T-cell (primary cell): ENCODE measurements at regions of chr1 and their contacts with region 1.

Region 1: GRCh38 chr1:185291652-185292051 is 25.4 kb downstream of the IVNS1ABP start:
- DNase-seq: peak in 1 of 35 experiments; percentile 4
- ATAC-seq: no peak
- H3K4me3 ChIP-seq: no peak overlapping the region
- H3K4me3 Mint-ChIP-seq: no peak overlapping the region
- H3K27ac ChIP-seq: no peak overlapping the region
- H3K27ac Mint-ChIP-seq: peak overlapping the region in 1 of 2 donors; percentile 71
- H3K4me1 ChIP-seq: peaks cover 0 to 5% of the 10 kb centered on the region in 2 experiments
- H3K4me1 Mint-ChIP-seq: peaks cover 31 to 39% (median 37%) of the 10 kb centered on the region in 3 donors
- H3K27me3 ChIP-seq: no peaks in the 10 kb centered on the region
- H3K27me3 Mint-ChIP-seq: no peaks in the 10 kb centered on the region

Region 2: DNA sequence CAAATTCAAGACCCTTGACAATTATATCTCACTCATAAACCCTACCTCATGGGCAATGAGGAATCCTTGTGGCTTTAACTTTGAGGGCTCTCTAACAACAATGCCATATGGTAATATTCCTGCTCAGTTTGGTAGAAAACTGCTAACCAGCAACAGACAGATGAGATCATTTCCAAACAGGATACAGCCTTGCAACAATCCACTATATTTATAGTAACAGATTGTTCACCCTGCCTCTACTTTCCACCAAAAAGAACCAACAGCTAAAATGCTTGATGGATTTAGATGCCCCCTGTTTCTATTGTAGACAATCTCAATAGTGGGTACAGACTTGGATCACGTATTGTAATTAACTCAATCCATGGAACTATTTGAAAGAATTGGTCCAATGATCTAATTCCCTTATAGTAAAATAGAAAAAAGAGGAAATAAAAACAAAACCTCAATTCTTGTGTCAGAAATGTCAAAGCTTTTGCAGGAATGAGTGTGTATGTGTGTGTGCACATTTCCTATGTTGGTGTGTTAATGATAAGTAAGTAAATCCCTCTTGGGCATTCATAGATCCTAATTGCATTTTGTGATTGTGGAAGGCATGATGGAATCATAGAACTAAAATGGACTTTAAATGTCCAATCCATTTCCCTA is 437.0 kb before region 1 on chr1:
- CTCF ChIA-PET with region 1: no interaction called
- POLR2A ChIA-PET with region 1: no interaction called
- DNase-seq: no peak
- ATAC-seq: no peak
- H3K4me3 ChIP-seq: no peak overlapping the region
- H3K4me3 Mint-ChIP-seq: no peak overlapping the region
- H3K27ac ChIP-seq: no peak overlapping the region
- H3K27ac Mint-ChIP-seq: no peak overlapping the region
- H3K4me1 ChIP-seq: peaks cover 0 to 5% of the 10 kb centered on the region in 2 experiments
- H3K4me1 Mint-ChIP-seq: peaks cover 0 to 7% (median 3%) of the 10 kb centered on the region in 3 donors
- H3K27me3 ChIP-seq: no peaks in the 10 kb centered on the region
- H3K27me3 Mint-ChIP-seq: peaks cover 0 to 4% of the 10 kb centered on the region in 2 donors

Region 3: GRCh38 chr1:185144233-185144632 is 147.4 kb before region 1 on chr1:
- CTCF ChIA-PET with region 1: no interaction called
- POLR2A ChIA-PET with region 1: no interaction called
- DNase-seq: no peak
- ATAC-seq: no peak
- H3K4me3 ChIP-seq: no peak overlapping the region
- H3K4me3 Mint-ChIP-seq: no peak overlapping the region
- H3K27ac ChIP-seq: no peak overlapping the region
- H3K27ac Mint-ChIP-seq: no peak overlapping the region
- H3K4me1 ChIP-seq: no peaks in the 10 kb centered on the region
- H3K4me1 Mint-ChIP-seq: peaks cover 0 to 15% (median 5%) of the 10 kb centered on the region in 3 donors
- H3K27me3 ChIP-seq: no peaks in the 10 kb centered on the region
- H3K27me3 Mint-ChIP-seq: no peaks in the 10 kb centered on the region

Region 4: GRCh38 chr1:185227161-185227560 is 64.5 kb before region 1 on chr1:
- CTCF ChIA-PET with region 1: no interaction called
- POLR2A ChIA-PET with region 1: no interaction called
- DNase-seq: no peak
- ATAC-seq: no peak
- H3K4me3 ChIP-seq: no peak overlapping the region
- H3K4me3 Mint-ChIP-seq: no peak overlapping the region
- H3K27ac ChIP-seq: no peak overlapping the region
- H3K27ac Mint-ChIP-seq: no peak overlapping the region
- H3K4me1 ChIP-seq: no peaks in the 10 kb centered on the region
- H3K4me1 Mint-ChIP-seq: peaks cover 0 to 2% (median 0%) of the 10 kb centered on the region in 3 donors
- H3K27me3 ChIP-seq: no peaks in the 10 kb centered on the region
- H3K27me3 Mint-ChIP-seq: no peaks in the 10 kb centered on the region

Region 5: GRCh38 chr1:185720633-185721272 is 429.1 kb after region 1 on chr1:
- CTCF ChIA-PET with region 1: no interaction called
- POLR2A ChIA-PET with region 1: interaction called in 1 of 2 experiments, 11 read pairs
- DNase-seq: peak in 1 of 35 experiments; percentile 17
- ATAC-seq: no peak
- H3K4me3 ChIP-seq: no peak overlapping the region
- H3K4me3 Mint-ChIP-seq: no peak overlapping the region
- H3K27ac ChIP-seq: no peak overlapping the region
- H3K27ac Mint-ChIP-seq: no peak overlapping the region
- H3K4me1 ChIP-seq: no peaks in the 10 kb centered on the region
- H3K4me1 Mint-ChIP-seq: no peaks in the 10 kb centered on the region
- H3K27me3 ChIP-seq: peaks cover 0 to 3% of the 10 kb centered on the region in 2 experiments
- H3K27me3 Mint-ChIP-seq: peaks cover 10 to 16% of the 10 kb centered on the region in 2 donors

Region 6: DNA sequence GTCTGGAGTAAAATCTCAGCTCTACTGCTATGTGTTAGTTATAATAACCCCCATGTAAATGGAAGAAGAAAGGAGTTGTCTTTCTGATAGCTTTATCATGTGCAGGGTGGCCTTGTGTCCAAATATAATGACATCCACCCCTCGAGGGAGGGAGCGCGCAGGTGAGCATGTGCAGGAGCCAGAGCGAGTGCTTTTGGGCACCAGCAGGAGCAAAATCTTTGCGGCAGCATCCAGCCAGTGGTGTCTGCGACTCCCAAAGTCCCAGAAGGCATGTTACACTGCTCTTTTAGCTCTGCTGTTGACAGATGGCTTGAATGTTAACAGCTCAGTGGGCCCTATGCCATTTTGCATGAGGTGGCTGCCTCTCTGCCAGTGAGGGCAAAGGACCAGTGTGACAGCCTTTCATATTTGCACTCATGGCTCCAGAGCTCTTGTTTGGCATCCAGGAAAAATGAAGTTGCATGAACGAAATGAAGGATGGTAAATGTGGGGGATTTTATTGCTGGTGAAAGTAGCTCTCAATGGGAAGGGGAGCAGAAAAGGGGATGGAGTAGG is 589.2 kb after region 1 on chr1:
- CTCF ChIA-PET with region 1: no interaction called
- POLR2A ChIA-PET with region 1: no interaction called
- DNase-seq: no peak
- ATAC-seq: no peak
- H3K4me3 ChIP-seq: no peak overlapping the region
- H3K4me3 Mint-ChIP-seq: no peak overlapping the region
- H3K27ac ChIP-seq: no peak overlapping the region
- H3K27ac Mint-ChIP-seq: no peak overlapping the region
- H3K4me1 ChIP-seq: no peaks in the 10 kb centered on the region
- H3K4me1 Mint-ChIP-seq: no peaks in the 10 kb centered on the region
- H3K27me3 ChIP-seq: no peaks in the 10 kb centered on the region
- H3K27me3 Mint-ChIP-seq: peaks cover 0 to 9% of the 10 kb centered on the region in 2 donors